ENCODE measurements at regions of chr2 and their contacts with region 1.

Region 1: GRCh38 chr2:175880-176800 is 87.7 kb downstream of the SH3YL1 start:
- DNase-seq: peak; percentile 61 to 72 (median 69)
- H3K4me3 ChIP-seq: peak overlapping the region; percentile 11 to 45
- H3K4me3 Mint-ChIP-seq: peak overlapping the region; percentile 42 to 87 (median 72)
- H3K27ac ChIP-seq: no peak overlapping the region
- H3K27ac Mint-ChIP-seq: peak overlapping the region; percentile 69 to 93 (median 85)
- H3K4me1 ChIP-seq: peaks cover 37% of the 10 kb centered on the region
- H3K4me1 Mint-ChIP-seq: peaks cover 35 to 56% (median 38%) of the 10 kb centered on the region in 4 donors
- H3K27me3 ChIP-seq: no peaks in the 10 kb centered on the region
- H3K27me3 Mint-ChIP-seq: no peaks in the 10 kb centered on the region

Region 2: GRCh38 chr2:201648-202433 is 25.7 kb after region 1 on chr2:
- CTCF ChIA-PET with region 1: no interaction called
- POLR2A ChIA-PET with region 1: interaction called, 16 read pairs
- intact Hi-C with region 1: no loop called
- DNase-seq: no peak
- H3K4me3 ChIP-seq: no peak overlapping the region
- H3K4me3 Mint-ChIP-seq: peak overlapping the region in 1 of 8 donors; percentile 48
- H3K27ac ChIP-seq: no peak overlapping the region
- H3K27ac Mint-ChIP-seq: peak overlapping the region in 2 of 7 donors; percentile 12 to 81
- H3K4me1 ChIP-seq: no peaks in the 10 kb centered on the region
- H3K4me1 Mint-ChIP-seq: peaks cover 8 to 16% (median 11%) of the 10 kb centered on the region in 4 donors
- H3K27me3 ChIP-seq: no peaks in the 10 kb centered on the region
- H3K27me3 Mint-ChIP-seq: peaks cover 0 to 3% of the 10 kb centered on the region in 2 donors

Region 3: DNA sequence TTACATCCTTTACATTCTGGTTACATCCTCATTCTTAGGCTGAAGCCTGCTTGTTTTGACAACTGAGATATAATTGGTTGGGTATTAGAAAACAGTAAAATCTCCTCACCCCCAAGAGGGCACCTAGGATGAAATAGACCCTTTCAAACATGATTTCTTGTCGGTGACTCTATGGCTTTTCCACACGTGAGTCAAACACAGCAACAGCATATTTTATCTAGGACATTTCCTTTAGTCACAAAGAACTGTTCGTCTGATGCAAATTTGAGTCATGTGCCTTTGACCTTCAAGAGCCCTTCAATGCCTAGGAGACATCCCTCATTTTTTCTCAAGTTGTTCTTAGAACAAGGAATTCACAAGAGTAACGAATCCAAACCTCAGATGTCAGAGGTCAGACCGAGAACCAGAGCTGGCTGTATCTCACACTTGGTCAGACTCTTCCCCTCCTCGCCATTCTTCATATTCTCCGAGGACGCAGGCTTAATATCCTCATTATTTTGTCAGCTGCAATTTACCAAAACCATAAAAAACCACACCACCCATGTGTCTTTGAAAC is 172.3 kb after region 1 on chr2:
- CTCF ChIA-PET with region 1: no interaction called
- POLR2A ChIA-PET with region 1: no interaction called
- intact Hi-C with region 1: no loop called
- DNase-seq: no peak
- H3K4me3 ChIP-seq: no peak overlapping the region
- H3K4me3 Mint-ChIP-seq: no peak overlapping the region
- H3K27ac ChIP-seq: no peak overlapping the region
- H3K27ac Mint-ChIP-seq: no peak overlapping the region
- H3K4me1 ChIP-seq: no peaks in the 10 kb centered on the region
- H3K4me1 Mint-ChIP-seq: peaks cover 0 to 1% (median 0%) of the 10 kb centered on the region in 4 donors
- H3K27me3 ChIP-seq: no peaks in the 10 kb centered on the region
- H3K27me3 Mint-ChIP-seq: peaks cover 16 to 25% of the 10 kb centered on the region in 2 donors

Measured in CD4-positive, alpha-beta memory T cell (primary cell).